Endothelial cell of umbilical vein (primary cell): ENCODE measurements at regions of chr9 and their contacts with region 1.

Region 1: DNA sequence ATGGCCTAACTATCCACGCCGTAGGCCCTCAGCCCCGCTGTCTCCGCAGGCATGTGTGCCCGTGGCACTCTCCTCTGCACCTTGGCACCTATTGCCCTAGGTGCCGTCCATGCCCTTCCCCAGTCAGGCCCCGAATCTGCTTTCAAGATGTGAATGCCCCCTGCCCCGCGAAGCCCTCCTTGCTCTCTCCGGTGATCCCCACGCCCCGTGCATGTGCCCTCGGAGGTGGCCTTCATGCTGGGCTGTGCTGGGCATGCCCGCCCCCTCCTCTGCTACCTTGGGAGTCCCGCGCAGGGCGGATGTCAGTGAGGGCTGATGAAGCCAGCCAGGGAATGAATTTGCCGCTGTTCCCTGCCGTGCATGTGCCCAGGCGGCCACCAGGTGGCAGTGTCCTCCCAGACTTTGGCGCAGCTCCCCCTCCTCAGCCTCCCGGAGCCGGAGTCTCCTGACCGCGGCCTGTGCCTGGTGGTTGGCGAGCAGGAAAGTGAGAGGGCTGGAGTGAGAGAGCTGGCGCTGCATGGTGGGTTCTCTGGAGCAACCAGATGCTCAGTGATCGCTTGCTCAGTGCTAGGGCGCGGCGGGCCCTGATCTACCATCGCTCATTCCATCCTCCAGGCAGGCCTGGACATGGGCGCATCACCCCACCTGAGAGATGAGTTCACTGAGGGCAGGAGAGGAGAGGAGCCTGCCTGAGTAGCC is 112.9 kb upstream of the LMX1B start:
- DNase-seq: peak; percentile 52
- H3K4me3 ChIP-seq: no peak overlapping the region
- H3K27ac ChIP-seq: no peak overlapping the region
- H3K4me1 ChIP-seq: no peaks in the 10 kb centered on the region
- H3K27me3 ChIP-seq: peaks cover 0 to 2% of the 10 kb centered on the region in 2 experiments
- CTCF ChIP-seq: peak; percentile 94 to 95
- POLR2A ChIP-seq: no peak

Region 2: GRCh38 chr9:125997196-125997823 is 503.5 kb before region 1 on chr9:
- CTCF ChIA-PET with region 1: no interaction called
- POLR2A ChIA-PET with region 1: no interaction called
- dilution Hi-C with region 1: no loop called
- intact Hi-C with region 1: no loop called
- DNase-seq: no peak
- H3K4me3 ChIP-seq: no peak overlapping the region
- H3K27ac ChIP-seq: no peak overlapping the region
- H3K4me1 ChIP-seq: no peaks in the 10 kb centered on the region
- H3K27me3 ChIP-seq: no peaks in the 10 kb centered on the region
- CTCF ChIP-seq: no peak
- POLR2A ChIP-seq: no peak

Region 3: GRCh38 chr9:126293522-126293889 is 207.3 kb before region 1 on chr9:
- CTCF ChIA-PET with region 1: no interaction called
- POLR2A ChIA-PET with region 1: no interaction called
- dilution Hi-C with region 1: no loop called
- intact Hi-C with region 1: no loop called
- DNase-seq: no peak
- H3K4me3 ChIP-seq: no peak overlapping the region
- H3K27ac ChIP-seq: no peak overlapping the region
- H3K4me1 ChIP-seq: no peaks in the 10 kb centered on the region
- H3K27me3 ChIP-seq: no peaks in the 10 kb centered on the region
- CTCF ChIP-seq: peak; percentile 26 to 38
- POLR2A ChIP-seq: no peak

Region 4: DNA sequence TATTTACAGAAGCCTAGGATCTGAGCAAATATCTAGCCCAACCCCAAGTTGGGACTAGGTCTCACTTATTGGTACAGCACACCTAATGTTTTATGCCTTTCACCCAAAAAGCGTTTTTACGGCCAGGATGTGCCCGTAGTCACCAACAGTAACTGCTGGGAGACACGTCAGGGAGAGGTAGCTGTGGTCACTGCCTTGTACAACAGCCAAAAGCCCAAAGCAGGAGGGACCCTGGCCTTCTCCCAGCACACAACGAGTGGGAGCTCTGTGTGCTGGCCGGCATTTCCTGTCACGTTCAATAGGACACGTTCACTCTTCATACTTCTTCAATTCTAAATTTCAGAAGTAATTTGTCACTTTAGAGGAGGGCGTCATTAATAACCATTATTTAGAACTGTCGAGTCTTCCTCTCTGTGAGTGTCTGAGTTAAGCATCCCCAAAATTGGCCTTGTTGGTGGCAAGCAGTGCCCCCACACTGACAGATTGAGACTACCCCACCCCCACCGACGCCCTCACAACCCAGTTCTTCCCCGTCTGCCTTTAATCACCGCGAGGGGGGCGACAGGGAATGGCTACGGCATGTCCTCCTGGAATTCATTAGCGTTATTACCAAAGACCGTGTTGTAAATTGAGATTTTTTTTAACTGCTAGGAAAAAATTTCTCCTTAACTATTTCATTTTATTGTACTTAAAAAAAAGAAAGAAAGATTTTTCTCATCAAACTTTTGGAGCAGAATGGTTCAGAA is 93.5 kb before region 1 on chr9:
- CTCF ChIA-PET with region 1: no interaction called
- POLR2A ChIA-PET with region 1: no interaction called
- dilution Hi-C with region 1: no loop called
- intact Hi-C with region 1: no loop called
- DNase-seq: no peak
- H3K4me3 ChIP-seq: no peak overlapping the region
- H3K27ac ChIP-seq: no peak overlapping the region
- H3K4me1 ChIP-seq: no peaks in the 10 kb centered on the region
- H3K27me3 ChIP-seq: no peaks in the 10 kb centered on the region
- CTCF ChIP-seq: no peak
- POLR2A ChIP-seq: no peak

Region 5: DNA sequence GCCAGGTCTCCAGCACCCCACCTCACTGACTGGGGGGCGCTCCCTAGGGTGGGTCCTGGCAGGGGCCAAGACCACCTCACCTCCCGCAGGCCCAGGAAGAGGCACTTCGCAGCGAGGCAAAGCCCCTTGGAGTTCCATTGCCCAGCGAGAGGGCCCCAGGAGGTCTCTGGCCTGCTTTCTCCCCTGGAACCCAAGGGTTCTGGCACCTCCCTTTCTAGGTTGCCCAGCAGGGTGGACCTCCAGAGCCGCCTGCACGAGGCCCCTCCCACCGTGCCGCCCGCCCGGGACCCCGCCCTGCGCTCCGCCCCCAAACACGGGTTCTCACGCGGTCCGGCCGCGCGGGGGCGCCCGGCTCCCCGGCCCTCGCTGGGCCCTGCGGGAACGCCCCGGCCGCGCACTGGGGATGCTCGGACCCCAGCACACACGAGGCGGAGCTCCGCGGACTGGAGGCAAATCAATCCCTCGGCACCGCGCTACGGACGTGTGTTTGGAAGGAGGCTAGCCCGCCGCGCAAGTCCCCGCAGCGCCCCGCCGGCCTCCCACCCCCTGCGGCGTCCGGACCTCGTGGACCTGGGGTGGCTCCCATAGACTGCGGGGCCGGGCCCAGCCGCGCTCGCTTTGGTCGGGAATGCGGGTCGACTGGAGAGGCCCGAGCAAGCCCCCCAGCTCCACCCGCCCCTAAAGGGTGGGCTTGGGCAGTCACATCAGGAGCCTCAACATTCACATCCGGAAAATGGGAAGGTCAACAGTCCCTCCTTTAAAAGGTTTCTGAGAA is 13.4 kb after region 1 on chr9:
- CTCF ChIA-PET with region 1: interaction called, 26 read pairs
- POLR2A ChIA-PET with region 1: no interaction called
- dilution Hi-C with region 1: no loop called
- intact Hi-C with region 1: no loop called
- DNase-seq: peak; percentile 53
- H3K4me3 ChIP-seq: no peak overlapping the region
- H3K27ac ChIP-seq: no peak overlapping the region
- H3K4me1 ChIP-seq: peaks cover 5% of the 10 kb centered on the region
- H3K27me3 ChIP-seq: peaks cover 16 to 25% of the 10 kb centered on the region in 2 experiments
- CTCF ChIP-seq: peak; percentile 42 to 64
- POLR2A ChIP-seq: no peak

Region 6: DNA sequence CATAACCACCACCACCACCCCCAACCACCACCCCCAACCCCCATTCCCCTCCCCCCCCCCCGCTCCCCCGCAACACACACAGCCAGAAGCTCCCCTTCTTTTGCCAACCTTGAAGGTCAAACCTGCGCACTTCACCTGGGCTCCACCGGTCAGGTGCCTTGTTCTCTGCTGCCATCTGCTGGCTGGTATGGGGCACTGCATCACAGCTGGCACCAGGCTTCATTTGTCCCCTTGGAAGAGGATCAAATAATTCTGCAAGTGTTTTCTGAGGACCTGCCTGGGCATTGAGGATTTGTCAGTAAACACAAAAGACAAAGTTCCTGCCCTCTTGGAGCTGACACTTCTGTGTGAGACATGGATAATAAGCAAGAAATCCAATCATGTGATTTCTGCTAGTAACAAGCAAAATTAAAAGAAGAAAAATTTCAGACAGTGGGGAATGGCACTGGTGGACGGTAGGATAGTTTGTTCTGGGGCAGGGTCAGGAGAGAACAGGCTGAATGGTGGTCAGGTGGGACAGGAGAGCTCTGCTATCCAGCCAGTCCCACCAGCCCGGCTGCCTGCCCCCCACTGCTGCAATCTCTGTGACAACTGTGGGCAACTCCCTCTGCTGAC is 57.3 kb after region 1 on chr9:
- CTCF ChIA-PET with region 1: interaction called, 126 read pairs
- POLR2A ChIA-PET with region 1: no interaction called
- dilution Hi-C with region 1: no loop called
- intact Hi-C with region 1: loop called (anchors 1 kb)
- DNase-seq: peak; percentile 46
- H3K4me3 ChIP-seq: no peak overlapping the region
- H3K27ac ChIP-seq: no peak overlapping the region
- H3K4me1 ChIP-seq: no peaks in the 10 kb centered on the region
- H3K27me3 ChIP-seq: peaks cover 5 to 14% of the 10 kb centered on the region in 2 experiments
- CTCF ChIP-seq: peak; percentile 91 to 95
- POLR2A ChIP-seq: no peak

Region 7: DNA sequence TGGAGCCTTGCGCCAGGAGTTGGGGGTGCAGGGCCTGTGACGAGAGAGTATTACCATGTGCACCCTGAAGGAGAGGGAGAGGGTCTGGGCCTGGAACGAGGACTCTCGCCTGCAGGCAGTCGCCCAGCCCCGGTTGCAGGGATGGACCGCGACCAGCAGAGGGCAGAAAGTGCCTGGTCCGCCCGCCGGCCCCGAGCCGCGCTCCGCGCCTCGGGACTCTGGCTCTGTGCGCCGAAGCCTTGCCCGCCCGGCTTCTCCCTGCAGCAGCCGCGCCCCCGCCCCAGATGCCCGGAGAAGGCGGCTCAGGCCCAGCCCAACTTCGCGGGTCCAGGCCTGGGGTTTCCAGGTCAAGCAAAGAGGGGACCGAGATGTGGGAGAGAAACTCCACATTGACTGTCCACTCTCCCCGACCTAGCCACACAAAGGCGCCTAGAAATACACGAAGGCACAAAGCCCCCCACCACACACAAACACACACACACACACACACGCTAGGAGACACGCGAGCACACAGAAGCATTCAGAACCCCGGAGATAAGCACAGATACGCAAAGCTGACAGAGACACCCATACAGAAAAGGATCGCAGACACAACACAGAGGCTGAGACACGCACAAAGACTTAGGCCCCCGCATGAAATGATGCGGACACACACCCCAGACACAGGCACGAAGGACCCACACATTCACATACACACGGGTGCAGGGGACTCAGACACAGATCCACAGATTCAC is 110.9 kb after region 1 on chr9:
- CTCF ChIA-PET with region 1: interaction called, 3 read pairs
- POLR2A ChIA-PET with region 1: no interaction called
- dilution Hi-C with region 1: no loop called
- intact Hi-C with region 1: loop called (anchors 5 kb)
- DNase-seq: peak; percentile 46
- H3K4me3 ChIP-seq: no peak overlapping the region
- H3K27ac ChIP-seq: no peak overlapping the region
- H3K4me1 ChIP-seq: no peaks in the 10 kb centered on the region
- H3K27me3 ChIP-seq: peaks cover 66% of the 10 kb centered on the region in 2 experiments
- CTCF ChIP-seq: peak; percentile 80 to 91
- POLR2A ChIP-seq: no peak

Region 8: DNA sequence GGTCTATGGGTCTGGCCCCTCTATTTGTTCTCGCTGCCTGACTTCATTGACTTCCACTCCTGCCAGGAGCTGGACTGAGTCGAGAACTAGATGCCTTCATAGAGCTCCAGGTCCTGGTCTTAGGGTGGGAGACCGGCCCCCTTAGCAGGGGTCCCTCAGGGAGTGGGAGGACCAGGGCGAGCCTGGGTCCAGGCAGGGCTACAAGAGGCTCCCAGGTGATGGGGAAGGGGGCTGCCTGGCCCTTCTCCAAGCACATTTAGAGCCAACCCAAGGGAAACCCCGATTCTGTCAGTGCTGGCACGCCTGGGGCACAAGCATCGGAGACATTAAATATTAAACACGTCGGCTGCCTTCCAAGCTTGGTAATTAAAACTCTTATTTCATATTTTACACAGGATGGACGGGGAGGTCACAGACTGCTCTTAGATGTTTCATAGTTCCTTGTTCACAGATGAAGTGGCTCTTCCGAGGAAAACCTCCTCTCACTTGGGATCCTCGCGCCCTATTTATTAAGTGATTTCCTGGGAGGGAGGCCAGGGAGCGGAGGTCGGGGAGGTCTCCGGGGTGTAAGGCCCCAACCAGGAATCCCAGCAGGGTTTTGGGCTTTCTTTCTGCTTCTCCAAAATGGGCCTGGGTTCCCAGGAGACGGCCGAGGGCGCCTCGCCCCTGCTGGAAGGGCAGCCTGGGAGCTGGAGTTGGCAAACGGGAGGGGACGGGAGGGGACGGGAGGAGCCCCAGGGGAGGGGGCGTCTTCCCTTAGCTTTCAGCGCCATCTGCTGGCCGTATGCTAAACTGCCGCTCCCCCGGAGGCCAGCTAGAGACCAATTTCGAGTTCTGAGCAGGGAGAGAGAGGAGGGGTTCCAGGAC is 280.6 kb after region 1 on chr9:
- CTCF ChIA-PET with region 1: interaction called, 9 read pairs
- POLR2A ChIA-PET with region 1: no interaction called
- dilution Hi-C with region 1: no loop called
- intact Hi-C with region 1: loop called (anchors 1 kb)
- DNase-seq: peak; percentile 69
- H3K4me3 ChIP-seq: no peak overlapping the region
- H3K27ac ChIP-seq: no peak overlapping the region
- H3K4me1 ChIP-seq: no peaks in the 10 kb centered on the region
- H3K27me3 ChIP-seq: peaks cover under 1% of the 10 kb centered on the region in 2 experiments
- CTCF ChIP-seq: peak; percentile 78 to 90
- POLR2A ChIP-seq: no peak